ENCODE measurements at regions of chr12 and their contacts with region 1.

Region 1: GRCh38 chr12:122984612-122985337 is 4.3 kb downstream of the ARL6IP4 start:
- DNase-seq: no peak
- H3K4me3 ChIP-seq: peak overlapping the region; percentile 6 to 52 (median 13)
- H3K27ac ChIP-seq: peak overlapping the region; percentile 35 to 70
- H3K4me1 ChIP-seq: peaks cover 14 to 16% of the 10 kb centered on the region in 2 donors
- H3K27me3 ChIP-seq: no peaks in the 10 kb centered on the region
- CTCF ChIP-seq: no peak
- POLR2A ChIP-seq: no peak

Region 2: DNA sequence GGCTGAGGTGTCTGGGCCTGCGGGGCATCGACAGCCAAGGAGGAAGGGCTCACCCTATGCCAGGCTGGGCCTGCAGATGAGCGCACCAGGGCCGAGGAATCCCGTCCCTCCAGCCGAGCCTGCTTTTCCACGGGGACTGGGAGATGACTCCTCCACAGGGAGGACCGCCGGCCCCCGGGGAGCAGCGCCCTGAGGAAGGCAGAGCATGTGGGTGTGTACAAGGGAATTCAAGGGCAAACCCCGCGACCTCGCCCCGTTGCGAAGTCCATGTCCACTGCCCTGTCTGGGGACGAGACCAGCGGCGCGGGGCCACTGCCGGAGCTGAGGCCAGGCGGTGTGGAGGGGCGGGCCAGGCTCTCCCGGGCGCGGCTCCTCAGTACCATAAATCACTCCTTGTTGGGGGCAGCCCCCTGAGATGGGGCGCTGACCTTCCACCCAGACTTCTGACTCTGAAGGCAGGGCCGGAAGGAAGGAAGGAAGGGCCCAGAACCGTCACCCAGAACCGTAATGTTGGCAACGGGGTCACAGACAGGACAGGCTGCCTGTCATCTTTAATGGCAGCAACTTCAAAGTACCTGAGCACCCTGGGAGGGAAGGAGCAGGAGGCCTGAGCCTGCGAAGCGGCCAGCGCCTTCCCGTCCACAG is 1532.3 kb before region 1 on chr12:
- intact Hi-C with region 1: loop called (anchors 5 kb)
- DNase-seq: peak in 1 of 2 donors; percentile 71
- H3K4me3 ChIP-seq: peak overlapping the region; percentile 21 to 57 (median 24)
- H3K27ac ChIP-seq: peak overlapping the region; percentile 83 to 89
- H3K4me1 ChIP-seq: no peaks in the 10 kb centered on the region
- H3K27me3 ChIP-seq: no peaks in the 10 kb centered on the region
- CTCF ChIP-seq: no peak
- POLR2A ChIP-seq: no peak

Measured in breast epithelium (tissue), 4 donors.